Head of caudate nucleus (tissue), 42 donors: ENCODE measurements at regions of chr12 and their contacts with region 1.

Region 1: GRCh38 chr12:96399919-96400797 is at the start of gene CDK17:
- DNase-seq: peak; percentile 64 to 94 (median 86)

Region 2: DNA sequence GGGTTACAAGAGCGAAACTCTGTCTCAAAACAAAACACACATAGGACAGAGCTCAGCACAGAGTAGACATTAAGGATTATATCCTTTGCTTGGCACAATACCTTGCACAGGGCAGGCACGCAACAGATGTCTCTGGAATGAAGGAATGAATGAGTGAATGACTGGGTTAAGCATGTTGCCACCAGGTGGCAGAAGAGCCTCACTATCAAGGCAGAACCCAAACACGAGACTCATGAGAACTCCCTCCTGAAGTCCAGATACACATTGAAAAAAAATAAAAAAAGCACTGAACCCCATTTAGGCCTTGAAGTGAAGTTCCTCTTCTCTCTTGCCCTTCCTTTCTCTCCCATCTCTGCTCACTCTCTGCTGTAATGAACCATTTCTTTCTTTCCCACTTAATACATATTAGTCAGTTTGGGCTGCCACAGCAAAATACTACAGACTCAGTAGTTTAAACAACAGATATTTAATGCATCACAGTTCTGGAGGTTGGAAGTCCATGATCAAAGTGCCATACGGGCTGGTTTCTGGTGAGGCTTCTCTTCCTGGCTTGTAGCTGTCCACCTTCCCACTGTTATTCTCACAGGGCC is 338.2 kb before region 1 on chr12:
- intact Hi-C with region 1: loop called (anchors 10 kb)
- DNase-seq: peak; percentile 19 to 86 (median 69)

Region 3: DNA sequence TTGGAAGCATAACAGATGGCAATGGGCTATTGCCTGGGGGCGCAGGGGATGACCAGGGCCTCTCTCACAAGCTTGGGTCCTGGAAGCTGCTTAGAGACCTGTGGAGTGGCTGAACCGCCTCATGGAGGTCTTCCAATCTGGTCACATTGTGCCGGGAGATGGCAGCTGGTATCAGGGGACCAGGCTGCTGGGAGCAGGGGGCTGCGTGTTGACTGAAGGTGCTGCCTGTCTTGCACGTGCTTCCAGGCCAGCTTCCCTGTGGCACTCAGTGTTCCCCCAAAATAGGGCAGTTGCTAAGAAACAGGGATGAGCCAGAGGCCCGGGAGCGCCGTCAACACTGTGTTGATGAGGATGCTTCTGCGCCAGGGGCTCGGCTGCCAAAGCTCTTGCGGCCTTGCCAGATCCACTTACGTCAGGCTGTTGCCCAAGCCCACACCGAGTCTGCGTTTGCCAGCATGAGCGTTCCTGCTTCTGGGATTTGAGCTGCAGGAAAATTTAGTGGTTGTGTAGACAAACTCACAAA is 166.2 kb before region 1 on chr12:
- intact Hi-C with region 1: loop called (anchors 2 kb)
- DNase-seq: peak; percentile 74 to 96 (median 90)

Region 4: DNA sequence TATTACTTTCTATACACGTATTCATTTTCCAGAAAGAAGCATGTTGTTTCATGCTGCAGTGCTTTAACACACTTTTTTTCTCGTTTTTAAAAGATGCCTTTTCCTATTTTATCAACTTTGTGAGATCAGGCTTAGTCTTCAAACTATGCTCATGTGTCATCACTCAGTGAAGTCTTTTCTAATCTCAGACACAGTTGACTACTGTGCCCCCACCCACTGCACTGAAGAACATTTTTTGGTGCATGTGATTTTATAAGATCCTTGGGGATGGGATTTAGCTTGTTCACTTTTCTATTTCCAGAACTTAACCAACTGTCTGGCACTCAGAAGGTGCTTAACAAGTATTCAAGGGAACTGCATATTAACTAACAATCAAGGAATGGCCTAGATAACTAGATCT is 85.4 kb before region 1 on chr12:
- intact Hi-C with region 1: loop called (anchors 5 kb)
- DNase-seq: peak in 15 of 42 donors; percentile 17 to 68 (median 33)

Region 5: DNA sequence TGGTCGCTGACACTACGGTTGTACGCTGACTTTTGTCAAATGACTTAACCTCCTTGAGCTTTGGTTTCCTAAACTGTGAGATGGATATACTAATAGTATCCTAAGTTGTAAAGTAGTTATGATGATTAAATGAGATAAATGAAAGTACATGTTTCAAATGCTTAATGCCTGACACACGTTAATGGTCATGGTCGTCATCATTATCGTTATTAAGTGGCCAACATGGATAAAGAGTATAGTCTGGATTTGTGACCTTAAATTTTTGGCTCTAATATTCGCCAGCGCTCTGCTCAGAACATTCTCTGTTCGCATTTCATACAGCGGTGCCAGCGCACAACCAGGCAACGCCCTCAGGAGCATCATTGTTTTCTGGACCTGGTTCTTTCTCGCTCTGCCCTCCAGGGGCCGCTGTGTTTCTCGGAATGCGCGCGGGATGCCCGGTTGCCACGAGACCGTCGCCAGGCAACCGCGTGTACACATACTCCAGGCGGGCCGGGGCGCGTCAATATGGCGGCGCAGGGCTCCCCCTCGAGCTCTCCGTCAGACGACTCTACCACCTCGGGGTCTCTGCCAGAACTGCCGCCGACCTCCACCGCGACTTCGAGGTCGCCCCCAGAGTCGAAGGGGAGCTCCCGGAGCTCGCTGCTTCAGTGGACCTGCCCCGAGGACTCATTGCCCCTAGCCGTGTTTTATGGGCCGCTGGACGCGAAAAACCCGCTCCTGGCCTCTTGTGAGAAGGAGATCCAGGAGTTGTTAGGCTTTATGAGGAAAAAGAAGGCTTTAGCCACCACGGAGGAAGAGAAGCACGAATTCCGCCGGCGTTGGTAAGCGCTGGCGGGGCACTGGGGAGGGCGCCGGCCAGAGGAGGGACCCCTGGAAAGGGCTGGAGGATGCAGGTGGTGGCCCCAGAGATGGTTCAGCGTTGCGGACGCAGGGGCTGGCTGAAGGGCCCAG is 89.2 kb after region 1 on chr12 and contains the start of gene CFAP54:
- intact Hi-C with region 1: loop called (anchors 2 kb)
- DNase-seq: peak; percentile 92 to 98 (median 95)

Region 6: DNA sequence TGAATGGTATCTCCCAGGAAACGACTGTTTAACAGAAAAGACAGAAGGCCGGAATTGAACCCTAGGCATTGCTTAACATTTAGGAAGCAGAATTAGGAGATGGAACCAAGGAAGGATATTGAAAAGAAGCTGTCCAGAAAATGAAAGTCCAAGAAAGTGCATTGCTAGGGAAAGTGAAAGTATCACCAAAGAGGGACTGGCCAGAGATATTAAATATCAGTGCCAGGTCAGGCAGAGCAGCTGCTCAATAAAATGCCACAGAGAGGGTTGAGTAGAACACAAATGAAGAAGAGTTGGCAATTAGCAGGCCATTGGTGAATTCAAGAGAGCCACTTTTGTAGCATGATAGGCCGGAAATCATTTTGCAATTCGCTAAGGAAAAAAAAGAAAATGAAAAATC is 190.8 kb after region 1 on chr12:
- intact Hi-C with region 1: no loop called
- DNase-seq: no peak